HepG2 (cell line): ENCODE measurements at regions of chr14 and their contacts with region 1.

Region 1: DNA sequence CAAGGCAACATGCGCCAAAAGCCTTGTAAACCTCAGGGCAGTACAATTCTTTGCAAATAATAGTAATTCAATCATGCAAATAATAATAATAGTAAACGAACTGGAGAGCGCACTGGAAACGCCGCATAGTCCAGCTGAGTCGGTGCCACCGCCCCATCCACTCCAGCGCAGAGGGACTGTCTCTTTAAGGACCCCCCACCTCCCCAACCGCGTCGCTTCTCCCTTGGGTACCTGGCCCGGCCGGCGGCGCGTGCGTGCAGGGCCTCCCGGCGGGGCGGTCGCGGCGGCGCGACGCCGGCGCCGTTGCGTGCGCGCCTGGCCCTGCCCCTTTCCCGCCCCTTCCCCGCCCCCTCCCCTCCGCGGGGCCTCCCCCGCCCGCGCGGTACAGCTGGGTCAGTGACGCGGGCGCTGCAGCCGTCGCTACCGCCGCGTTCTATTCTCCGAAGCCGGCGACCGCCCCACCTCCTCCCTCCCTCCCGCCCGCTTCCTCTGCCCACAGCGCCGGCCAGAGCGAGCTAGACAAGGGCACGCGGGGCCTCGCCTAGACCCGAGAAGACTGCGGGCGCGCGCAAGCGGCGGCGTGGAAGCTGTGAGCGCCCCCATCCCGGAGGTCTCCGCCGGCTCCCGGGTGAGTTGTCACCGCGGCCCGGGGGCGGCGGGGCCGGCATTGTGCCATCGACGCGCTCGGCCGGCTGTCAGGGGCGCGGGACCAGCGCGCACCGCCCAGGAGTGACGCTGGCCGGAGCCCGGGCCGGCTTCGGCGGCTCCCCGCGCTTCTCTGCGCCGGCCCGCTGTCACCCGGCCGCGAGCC is at the start of gene SUSD6:
- DNase-seq: peak; percentile 74
- ATAC-seq: peak; percentile 85
- H3K4me3 ChIP-seq: peak within 1 kb of the TSS; percentile 80 to 92 (median 87)
- H3K27ac ChIP-seq: peak within 1 kb of the TSS; percentile 59
- H3K4me1 ChIP-seq: peaks cover 72% of the 10 kb centered on the region
- H3K27me3 ChIP-seq: no peaks in the 10 kb centered on the region; a peak in 1 of 5 replicates
- CTCF ChIP-seq: no peak; the same call in 1 of the 2 replicates
- EP300 ChIP-seq: no peak
- POLR2A ChIP-seq: peak in 1 of 2 experiments; percentile 60; a peak in 1 of 4 replicates
- RAD21 ChIP-seq: peak; percentile 29; the same call in 1 of the 2 replicates
- total RNA-seq, gene SUSD6: 4.8 and 7.2 TPM in 2 replicates

Region 2: GRCh38 chr14:69637503-69638030 is 26.2 kb after region 1 on chr14:
- CTCF ChIA-PET with region 1: no interaction called
- POLR2A ChIA-PET with region 1: interaction called, 4 read pairs
- in situ Hi-C with region 1: no loop called
- intact Hi-C with region 1: loop called (anchors 1 kb)
- DNase-seq: peak; percentile 60
- ATAC-seq: peak; percentile 90
- H3K4me3 ChIP-seq: peak overlapping the region in 2 of 3 experiments; percentile 8 to 38; a peak in 2 of 6 replicates
- H3K27ac ChIP-seq: peak overlapping the region; percentile 23
- H3K4me1 ChIP-seq: peaks cover 72% of the 10 kb centered on the region
- H3K27me3 ChIP-seq: no peaks in the 10 kb centered on the region
- CTCF ChIP-seq: no peak
- EP300 ChIP-seq: peak in 1 of 2 experiments; percentile 21; a peak in 1 of 4 replicates
- POLR2A ChIP-seq: no peak
- RAD21 ChIP-seq: no peak

Region 3: DNA sequence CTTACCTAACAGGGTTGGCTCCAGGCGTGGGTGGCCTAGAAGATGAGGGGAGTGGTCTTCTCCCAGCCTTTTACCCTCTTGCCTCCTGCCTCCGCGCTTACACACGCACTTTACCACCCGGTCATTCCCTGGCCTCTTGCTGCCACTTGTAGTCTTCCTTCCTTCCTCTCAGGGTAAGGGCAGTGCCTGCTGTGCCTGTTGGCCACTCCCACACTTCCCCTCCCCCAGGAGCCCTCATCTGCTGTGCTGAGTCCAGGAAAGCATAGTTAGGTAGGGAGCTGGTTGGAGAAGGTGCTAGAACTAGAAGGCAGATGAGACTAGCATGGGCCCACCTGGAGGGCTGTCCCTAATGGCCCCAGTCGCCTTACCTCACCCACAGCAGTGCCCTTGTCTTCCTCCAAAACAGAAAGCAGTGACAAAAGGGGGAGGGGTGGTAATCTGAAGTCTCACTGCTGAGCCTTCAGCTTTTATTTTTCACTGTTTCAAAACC is 101.2 kb after region 1 on chr14:
- CTCF ChIA-PET with region 1: no interaction called
- POLR2A ChIA-PET with region 1: interaction called, 5 read pairs
- in situ Hi-C with region 1: no loop called
- intact Hi-C with region 1: loop called (anchors 5 kb)
- DNase-seq: no peak
- ATAC-seq: peak; percentile 19
- H3K4me3 ChIP-seq: no peak overlapping the region
- H3K27ac ChIP-seq: no peak overlapping the region
- H3K4me1 ChIP-seq: peaks cover 38% of the 10 kb centered on the region
- H3K27me3 ChIP-seq: no peaks in the 10 kb centered on the region
- CTCF ChIP-seq: no peak
- EP300 ChIP-seq: no peak
- POLR2A ChIP-seq: no peak
- RAD21 ChIP-seq: no peak